ENCODE measurements at regions of chr1 and their contacts with region 1.

Region 1: DNA sequence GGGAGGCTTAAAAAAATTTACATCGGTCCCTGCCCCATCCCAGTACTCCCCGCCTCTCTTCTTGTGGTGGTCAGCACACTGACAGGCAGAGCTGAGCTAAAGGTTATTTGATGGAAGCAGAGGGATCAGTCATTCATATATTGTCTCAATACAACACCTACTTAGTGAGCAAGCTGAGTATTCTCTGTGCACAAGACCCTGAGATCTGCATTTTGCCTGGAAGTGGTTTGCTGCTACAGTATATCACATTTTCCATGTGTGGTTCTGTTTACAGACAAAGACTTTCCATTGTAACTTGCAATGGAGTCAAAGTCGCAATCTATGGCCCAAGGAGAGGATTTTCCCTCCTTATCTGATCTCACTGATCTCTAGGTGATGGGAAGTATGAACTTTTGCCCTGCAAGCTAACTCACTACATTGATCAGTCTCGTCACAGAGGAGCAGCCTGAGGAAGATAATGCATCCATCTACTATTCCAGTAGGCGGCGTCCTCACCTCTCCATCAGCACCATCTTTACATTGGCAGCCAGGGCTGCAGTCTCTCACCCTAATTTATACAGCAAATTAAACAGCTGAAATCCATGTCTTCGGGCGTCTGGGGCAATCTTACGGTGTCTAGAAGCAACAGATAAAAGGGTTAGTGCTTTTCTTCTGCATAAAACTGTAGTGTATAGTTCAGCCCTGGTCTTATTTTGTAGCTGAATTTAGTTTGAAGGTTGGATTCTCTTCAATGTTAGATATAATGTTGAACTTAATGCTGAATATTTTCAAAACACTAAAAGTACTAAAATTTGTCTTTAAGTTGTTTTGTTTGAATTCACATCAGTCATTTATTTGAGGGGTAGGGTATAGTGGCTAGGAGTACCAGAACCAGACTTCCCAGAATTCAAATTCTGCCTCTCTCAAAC is 3.2 kb upstream of the TRAF5 start:
- DNase-seq: peak; percentile 80
- H3K4me3 Mint-ChIP-seq: no peak overlapping the region
- H3K27ac Mint-ChIP-seq: no peak overlapping the region
- H3K4me1 Mint-ChIP-seq: peaks cover 47% of the 10 kb centered on the region
- H3K27me3 Mint-ChIP-seq: no peaks in the 10 kb centered on the region

Region 2: GRCh38 chr1:210076620-210077019 is 1246.8 kb before region 1 on chr1:
- CTCF ChIA-PET with region 1: no interaction called
- DNase-seq: no peak
- H3K4me3 Mint-ChIP-seq: no peak overlapping the region
- H3K27ac Mint-ChIP-seq: no peak overlapping the region
- H3K4me1 Mint-ChIP-seq: no peaks in the 10 kb centered on the region
- H3K27me3 Mint-ChIP-seq: no peaks in the 10 kb centered on the region

Region 3: GRCh38 chr1:211335522-211336157 is 12.2 kb after region 1 on chr1:
- CTCF ChIA-PET with region 1: interaction called, 16 read pairs
- DNase-seq: peak; percentile 59
- H3K4me3 Mint-ChIP-seq: peak overlapping the region; percentile 60
- H3K27ac Mint-ChIP-seq: peak overlapping the region; percentile 91
- H3K4me1 Mint-ChIP-seq: peaks cover 90% of the 10 kb centered on the region
- H3K27me3 Mint-ChIP-seq: no peaks in the 10 kb centered on the region

Region 4: GRCh38 chr1:211344152-211344618 is 20.8 kb after region 1 on chr1:
- CTCF ChIA-PET with region 1: interaction called, 14 read pairs
- DNase-seq: no peak
- H3K4me3 Mint-ChIP-seq: no peak overlapping the region
- H3K27ac Mint-ChIP-seq: no peak overlapping the region
- H3K4me1 Mint-ChIP-seq: peaks cover 51% of the 10 kb centered on the region
- H3K27me3 Mint-ChIP-seq: no peaks in the 10 kb centered on the region

Region 5: DNA sequence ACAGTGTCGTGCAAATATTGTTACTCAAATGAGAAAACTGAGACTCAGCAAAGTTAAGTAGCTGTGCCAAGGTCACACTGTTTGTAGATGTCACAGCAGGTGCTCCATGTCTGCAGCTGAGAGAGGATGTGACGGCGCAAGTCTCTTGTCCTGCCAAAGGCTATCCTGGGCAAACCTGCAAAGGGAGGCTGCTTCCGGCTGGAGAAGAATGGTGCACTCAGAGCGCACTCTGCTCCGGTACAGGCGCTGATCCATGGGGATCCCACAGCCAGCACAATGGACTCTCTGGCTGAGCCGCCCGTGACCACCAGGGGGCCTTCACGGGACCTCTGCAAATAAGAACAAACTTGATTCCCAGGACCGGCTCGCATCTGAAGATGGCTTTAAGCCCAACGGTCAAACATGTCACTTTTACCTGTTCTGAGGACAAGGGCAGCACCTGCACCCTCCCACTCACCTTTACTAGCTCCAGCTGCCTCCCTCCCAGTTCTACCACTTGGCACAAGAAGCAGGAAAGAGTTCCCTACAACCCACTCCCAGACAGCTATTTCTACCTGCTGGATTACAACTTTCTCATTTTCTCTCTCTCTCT is 146.6 kb after region 1 on chr1:
- CTCF ChIA-PET with region 1: interaction called, 17 read pairs
- DNase-seq: peak; percentile 53
- H3K4me3 Mint-ChIP-seq: no peak overlapping the region
- H3K27ac Mint-ChIP-seq: no peak overlapping the region
- H3K4me1 Mint-ChIP-seq: no peaks in the 10 kb centered on the region
- H3K27me3 Mint-ChIP-seq: peaks cover 35% of the 10 kb centered on the region

Region 6: GRCh38 chr1:211476200-211476849 is 152.9 kb after region 1 on chr1:
- CTCF ChIA-PET with region 1: interaction called, 66 read pairs
- DNase-seq: peak; percentile 87
- H3K4me3 Mint-ChIP-seq: no peak overlapping the region
- H3K27ac Mint-ChIP-seq: no peak overlapping the region
- H3K4me1 Mint-ChIP-seq: peaks cover 3% of the 10 kb centered on the region
- H3K27me3 Mint-ChIP-seq: peaks cover 49% of the 10 kb centered on the region

Region 7: GRCh38 chr1:211557894-211558625 is 234.7 kb after region 1 on chr1:
- CTCF ChIA-PET with region 1: no interaction called
- DNase-seq: no peak
- H3K4me3 Mint-ChIP-seq: no peak overlapping the region
- H3K27ac Mint-ChIP-seq: no peak overlapping the region
- H3K4me1 Mint-ChIP-seq: no peaks in the 10 kb centered on the region
- H3K27me3 Mint-ChIP-seq: peaks cover 39% of the 10 kb centered on the region

Measured in activated naive CD4-positive, alpha-beta T cell treated with anti-CD3 and anti-CD28 coated beads, Interleukin-2, amount 10 ng/mL, durations not matched to agents 7 days and 5 days (primary cell).